ENCODE measurements at regions of chr19 and their contacts with region 1.

Region 1: GRCh38 chr19:3821857-3822364 is 35.7 kb upstream of the MATK start:
- DNase-seq: peak; percentile 85 to 91 (median 89)
- H3K4me3 ChIP-seq: peak overlapping the region in 1 of 7 experiments; percentile 23
- H3K27ac ChIP-seq: no peak overlapping the region
- H3K4me1 ChIP-seq: peaks cover 0 to 34% (median 10%) of the 10 kb centered on the region in 4 experiments
- H3K27me3 ChIP-seq: no peaks in the 10 kb centered on the region

Region 2: DNA sequence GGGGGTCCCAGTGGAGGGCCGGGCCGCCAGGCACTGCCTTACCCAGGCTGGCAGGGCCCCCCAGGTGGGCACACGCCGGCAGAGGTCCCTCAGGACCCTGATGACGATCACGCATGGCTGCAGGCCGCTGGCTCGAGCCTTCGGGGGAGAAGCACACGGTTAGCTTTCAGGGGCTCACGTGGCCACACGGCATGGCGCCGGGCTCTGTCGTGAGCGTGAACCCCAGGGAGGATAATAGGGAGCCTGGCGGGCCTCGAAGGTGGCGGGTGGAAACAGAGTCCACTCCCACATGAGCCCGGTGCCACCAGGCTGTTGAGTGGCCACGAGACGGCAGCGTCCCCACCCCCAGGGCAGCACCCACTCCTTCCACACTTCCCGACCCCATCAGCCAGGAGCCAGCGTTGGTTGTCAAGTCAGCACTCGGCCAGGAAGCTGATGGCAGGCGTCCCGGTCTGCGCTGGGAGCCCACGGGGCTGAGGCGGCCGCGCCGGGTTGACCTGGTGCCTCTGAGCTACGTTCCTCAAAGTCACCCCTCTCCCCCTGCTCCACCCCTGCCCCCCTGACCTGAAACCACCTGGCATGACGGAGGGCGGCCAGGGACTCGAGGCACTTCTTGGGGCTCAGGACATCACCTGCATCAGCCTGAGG is 11.1 kb before region 1 on chr19:
- CTCF ChIA-PET with region 1: interaction called, 17 read pairs
- POLR2A ChIA-PET with region 1: interaction called, 3 read pairs
- DNase-seq: no peak
- H3K4me3 ChIP-seq: no peak overlapping the region
- H3K27ac ChIP-seq: no peak overlapping the region
- H3K4me1 ChIP-seq: peaks cover 2 to 58% (median 24%) of the 10 kb centered on the region in 4 experiments
- H3K27me3 ChIP-seq: no peaks in the 10 kb centered on the region